ENCODE measurements at regions of chrX and their contacts with region 1.

Region 1: DNA sequence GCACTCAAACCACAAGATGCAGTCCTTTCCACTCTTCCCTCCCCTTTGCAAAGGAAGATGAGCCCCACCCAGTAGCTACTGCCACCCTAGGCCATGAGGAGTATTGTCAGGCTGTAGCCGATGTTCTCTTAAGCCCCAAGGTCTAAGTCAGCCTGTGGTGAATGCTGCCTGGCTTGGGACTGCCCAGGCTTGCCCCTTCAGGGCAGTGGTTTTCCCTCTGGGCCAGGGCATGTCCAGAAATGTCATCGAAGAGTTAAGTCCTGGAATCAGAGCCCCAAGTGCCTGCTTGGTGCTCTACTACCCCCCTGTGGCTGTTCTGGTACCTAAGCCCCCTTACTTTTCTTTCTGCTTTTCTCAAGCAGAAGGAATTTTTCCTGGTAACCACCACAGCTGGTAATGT is 11.8 kb upstream of the PGK1 start:
- DNase-seq: peak; percentile 10
- H3K4me3 Mint-ChIP-seq: no peak overlapping the region
- H3K27ac Mint-ChIP-seq: no peak overlapping the region
- H3K4me1 Mint-ChIP-seq: no peaks in the 10 kb centered on the region
- H3K27me3 Mint-ChIP-seq: no peaks in the 10 kb centered on the region

Region 2: GRCh38 chrX:78024349-78025108 is 67.8 kb before region 1 on chrX:
- CTCF ChIA-PET with region 1: no interaction called
- POLR2A ChIA-PET with region 1: no interaction called
- intact Hi-C with region 1: loop called (anchors 5 kb)
- DNase-seq: peak; percentile 10
- H3K4me3 Mint-ChIP-seq: no peak overlapping the region
- H3K27ac Mint-ChIP-seq: no peak overlapping the region
- H3K4me1 Mint-ChIP-seq: no peaks in the 10 kb centered on the region
- H3K27me3 Mint-ChIP-seq: no peaks in the 10 kb centered on the region

Measured in activated CD4-positive, alpha-beta memory T cell treated with anti-CD3 and anti-CD28 coated beads for 36 hours (primary cell).